Vagina (tissue), 2 donors: ENCODE measurements at regions of chr12 and their contacts with region 1.

Region 1: DNA sequence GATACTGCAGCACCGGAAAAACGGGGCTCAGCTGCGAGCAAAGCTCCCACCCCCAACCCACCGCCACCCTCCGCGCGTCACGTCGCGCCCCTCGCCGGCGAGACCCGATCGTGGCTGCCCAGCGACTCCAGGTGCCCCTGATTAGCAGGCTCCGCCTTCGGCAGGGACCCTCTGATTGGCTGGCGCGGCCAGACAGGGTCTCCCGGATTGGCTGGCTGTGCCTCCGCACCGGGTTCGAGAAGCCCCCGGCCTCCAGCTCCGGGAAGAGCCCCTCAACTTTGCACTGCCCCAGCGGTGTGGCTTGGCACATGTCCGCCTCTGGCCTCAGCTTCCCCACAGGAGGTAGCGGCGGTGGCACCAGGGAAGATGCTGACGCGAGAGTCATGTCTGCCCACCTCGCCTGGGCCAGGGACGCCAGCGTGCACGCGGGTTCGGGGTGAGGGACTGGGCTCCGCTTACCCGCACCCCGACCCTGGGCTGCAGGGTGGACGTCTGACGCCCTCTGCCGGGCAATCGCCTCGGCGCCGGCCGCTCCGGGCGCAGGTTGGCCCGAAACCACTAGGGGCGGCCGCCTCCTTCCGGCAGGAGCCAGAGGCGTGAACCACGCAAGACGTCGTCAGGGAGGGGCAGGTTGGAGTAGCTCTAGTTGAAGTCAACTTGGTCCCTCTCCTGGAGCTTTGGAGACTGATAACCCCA is 498 bp upstream of the RHOF start:
- DNase-seq: no peak
- H3K4me3 ChIP-seq: peak overlapping the region; percentile 62 to 65
- H3K27ac ChIP-seq: peak overlapping the region; percentile 100
- H3K4me1 ChIP-seq: peaks cover 70% of the 10 kb centered on the region
- H3K27me3 ChIP-seq: no peaks in the 10 kb centered on the region
- CTCF ChIP-seq: peak; percentile 94 to 100 (median 99)
- POLR2A ChIP-seq: no peak

Region 2: GRCh38 chr12:121697098-121697698 is 96.8 kb before region 1 on chr12:
- intact Hi-C with region 1: loop called (anchors 5 kb)
- DNase-seq: no peak
- H3K4me3 ChIP-seq: no peak overlapping the region
- H3K27ac ChIP-seq: no peak overlapping the region
- H3K4me1 ChIP-seq: no peaks in the 10 kb centered on the region
- H3K27me3 ChIP-seq: no peaks in the 10 kb centered on the region
- CTCF ChIP-seq: peak; percentile 45 to 71 (median 66)
- POLR2A ChIP-seq: no peak

Region 3: DNA sequence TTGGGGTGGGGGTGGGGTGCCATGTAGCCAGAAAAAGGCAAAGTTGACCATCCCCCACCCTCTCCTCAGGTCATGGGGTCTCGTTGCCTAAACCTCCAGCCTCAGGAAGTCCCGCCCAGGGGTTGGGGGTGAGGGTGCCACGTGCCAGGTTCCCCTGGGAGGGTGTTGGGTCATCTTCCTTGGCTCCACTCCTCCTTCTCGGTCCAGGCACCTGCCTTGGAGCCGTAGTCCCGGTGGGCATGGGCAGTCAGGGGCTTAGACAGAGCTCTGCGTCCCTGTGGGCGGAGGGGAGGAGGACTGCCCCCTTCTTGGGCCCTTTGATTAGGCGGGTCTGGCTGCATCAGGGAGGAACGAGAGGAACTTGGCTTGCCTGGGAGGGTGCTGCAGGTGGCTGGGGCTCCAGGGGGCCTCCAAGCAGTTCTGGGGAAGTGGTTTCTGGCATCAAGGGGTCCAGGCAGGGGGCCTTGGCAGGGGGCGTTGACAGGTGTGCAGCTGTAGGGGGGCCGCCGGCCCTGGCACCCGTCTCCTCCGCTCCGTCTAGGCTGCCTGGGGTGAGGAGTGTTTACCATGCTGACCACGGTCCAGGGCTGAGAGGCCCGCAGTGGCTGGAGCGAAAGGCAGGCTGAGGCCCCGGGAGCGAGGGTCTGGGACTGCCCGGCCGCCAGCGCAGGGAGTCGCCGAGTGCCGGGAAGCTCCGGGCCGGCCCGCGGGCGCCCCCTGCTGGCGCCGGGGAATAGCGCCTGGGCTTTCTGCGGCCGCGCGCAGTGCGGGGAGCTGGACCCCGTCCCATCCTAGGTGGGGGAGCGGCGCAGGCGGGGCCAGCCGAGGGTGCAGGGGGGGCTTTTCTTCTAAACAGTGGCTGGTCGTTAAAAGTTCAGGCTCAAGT is 17.7 kb after region 1 on chr12:
- intact Hi-C with region 1: loop called (anchors 1 kb)
- DNase-seq: no peak
- H3K4me3 ChIP-seq: peak overlapping the region; percentile 66 to 74
- H3K27ac ChIP-seq: peak overlapping the region; percentile 94
- H3K4me1 ChIP-seq: peaks cover 55% of the 10 kb centered on the region
- H3K27me3 ChIP-seq: no peaks in the 10 kb centered on the region
- CTCF ChIP-seq: peak; percentile 93 to 100 (median 98)
- POLR2A ChIP-seq: no peak

Region 4: GRCh38 chr12:121888478-121889266 is 94.7 kb after region 1 on chr12 and contains the start of gene PSMD9:
- intact Hi-C with region 1: loop called (anchors 5 kb)
- DNase-seq: peak; percentile 97
- H3K4me3 ChIP-seq: peak within 1 kb of the TSS; percentile 71 to 89
- H3K27ac ChIP-seq: peak within 1 kb of the TSS; percentile 97
- H3K4me1 ChIP-seq: peaks cover 32% of the 10 kb centered on the region
- H3K27me3 ChIP-seq: no peaks in the 10 kb centered on the region
- CTCF ChIP-seq: peak; percentile 42 to 52 (median 44)
- POLR2A ChIP-seq: peak in 1 of 2 donors; percentile 56
- total RNA-seq, gene PSMD9: 46.2 TPM